Tibial artery (tissue), 4 donors: ENCODE measurements at regions of chr11 and their contacts with region 1.

Region 1: GRCh38 chr11:1202776-1203504 is 19.9 kb upstream of the MUC5B start:
- DNase-seq: peak; percentile 33 to 73
- H3K4me3 ChIP-seq: no peak overlapping the region
- H3K27ac ChIP-seq: no peak overlapping the region
- H3K4me1 ChIP-seq: peaks cover 0 to 19% (median 3%) of the 10 kb centered on the region in 4 donors
- H3K27me3 ChIP-seq: peaks cover 0 to 70% of the 10 kb centered on the region in 2 donors
- CTCF ChIP-seq: peak; percentile 79 to 93

Region 2: DNA sequence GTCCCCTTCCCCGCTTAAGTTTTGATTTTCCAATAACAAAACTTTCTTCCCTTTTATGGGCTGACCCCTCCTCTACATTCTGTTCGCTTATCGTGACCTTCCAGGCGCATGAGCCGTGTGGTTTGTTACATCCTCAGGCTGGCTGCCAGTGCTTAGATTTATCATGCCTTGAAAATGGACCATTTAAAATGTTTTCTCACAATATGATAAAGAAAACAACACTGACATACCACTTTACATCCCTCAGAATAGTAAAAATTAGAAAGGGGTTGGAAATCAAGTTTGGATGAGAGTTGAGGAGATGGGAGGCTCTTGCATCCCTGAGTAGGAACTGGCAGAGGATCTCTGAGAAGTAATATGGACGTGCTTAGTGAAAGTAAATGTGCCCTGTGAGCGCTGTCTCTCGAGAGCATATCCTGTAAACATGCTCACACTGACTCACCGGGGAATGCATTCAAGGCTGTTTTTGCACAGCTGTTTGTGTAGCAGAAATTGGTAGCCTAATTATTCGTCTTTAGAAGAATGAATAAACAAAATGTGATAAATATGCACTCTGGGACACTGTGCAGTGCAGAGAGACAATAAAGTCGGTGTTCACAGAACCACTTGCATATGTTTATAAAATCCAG is 123.6 kb after region 1 on chr11:
- intact Hi-C with region 1: no loop called
- DNase-seq: no peak
- H3K4me3 ChIP-seq: no peak overlapping the region
- H3K27ac ChIP-seq: no peak overlapping the region
- H3K4me1 ChIP-seq: no peaks in the 10 kb centered on the region
- H3K27me3 ChIP-seq: peaks cover 0 to 3% of the 10 kb centered on the region in 2 donors
- CTCF ChIP-seq: no peak

Region 3: GRCh38 chr11:1515082-1516060 is 312.4 kb after region 1 on chr11:
- intact Hi-C with region 1: loop called (anchors 5 kb)
- DNase-seq: peak; percentile 72 to 87
- H3K4me3 ChIP-seq: peak overlapping the region; percentile 16 to 28
- H3K27ac ChIP-seq: peak overlapping the region; percentile 48 to 52
- H3K4me1 ChIP-seq: peaks cover 0 to 63% (median 45%) of the 10 kb centered on the region in 4 donors
- H3K27me3 ChIP-seq: no peaks in the 10 kb centered on the region
- CTCF ChIP-seq: peak; percentile 92 to 97